Cardiac septum (tissue), 1 donor: ENCODE measurements at regions of chr19 and their contacts with region 1.

Region 1: GRCh38 chr19:34974646-34975045 is 10.6 kb upstream of the ZNF792 start:
- DNase-seq: no peak

Region 2: DNA sequence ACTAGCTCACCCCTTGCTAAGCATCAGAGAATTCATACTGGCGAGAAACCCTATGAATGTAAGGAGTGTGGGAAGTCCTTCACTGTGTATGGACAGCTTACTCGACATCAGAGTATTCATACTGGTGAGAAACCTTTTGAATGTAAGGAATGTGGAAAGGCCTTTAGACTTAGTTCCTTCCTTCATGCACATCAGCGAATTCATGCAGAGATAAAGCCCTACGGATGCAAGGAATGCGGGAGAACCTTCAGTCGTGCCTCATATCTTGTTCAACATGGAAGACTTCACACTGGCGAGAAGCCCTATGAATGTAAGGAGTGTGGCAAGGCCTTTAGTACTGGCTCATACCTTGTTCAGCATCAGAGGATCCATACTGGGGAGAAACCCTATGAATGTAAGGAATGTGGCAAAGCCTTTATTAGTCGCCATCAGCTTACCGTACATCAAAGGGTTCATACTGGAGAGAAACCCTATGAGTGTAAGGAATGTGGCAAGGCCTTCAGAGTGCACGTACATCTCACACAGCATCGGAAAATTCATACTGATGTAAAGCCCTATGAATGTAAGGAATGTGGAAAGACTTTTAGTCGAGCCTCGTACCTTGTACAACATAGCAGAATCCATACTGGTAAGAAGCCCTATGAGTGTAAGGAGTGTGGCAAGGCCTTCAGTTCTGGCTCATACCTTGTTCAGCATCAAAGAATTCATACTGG is 30.6 kb before region 1 on chr19:
- intact Hi-C with region 1: no loop called
- DNase-seq: no peak

Region 3: DNA sequence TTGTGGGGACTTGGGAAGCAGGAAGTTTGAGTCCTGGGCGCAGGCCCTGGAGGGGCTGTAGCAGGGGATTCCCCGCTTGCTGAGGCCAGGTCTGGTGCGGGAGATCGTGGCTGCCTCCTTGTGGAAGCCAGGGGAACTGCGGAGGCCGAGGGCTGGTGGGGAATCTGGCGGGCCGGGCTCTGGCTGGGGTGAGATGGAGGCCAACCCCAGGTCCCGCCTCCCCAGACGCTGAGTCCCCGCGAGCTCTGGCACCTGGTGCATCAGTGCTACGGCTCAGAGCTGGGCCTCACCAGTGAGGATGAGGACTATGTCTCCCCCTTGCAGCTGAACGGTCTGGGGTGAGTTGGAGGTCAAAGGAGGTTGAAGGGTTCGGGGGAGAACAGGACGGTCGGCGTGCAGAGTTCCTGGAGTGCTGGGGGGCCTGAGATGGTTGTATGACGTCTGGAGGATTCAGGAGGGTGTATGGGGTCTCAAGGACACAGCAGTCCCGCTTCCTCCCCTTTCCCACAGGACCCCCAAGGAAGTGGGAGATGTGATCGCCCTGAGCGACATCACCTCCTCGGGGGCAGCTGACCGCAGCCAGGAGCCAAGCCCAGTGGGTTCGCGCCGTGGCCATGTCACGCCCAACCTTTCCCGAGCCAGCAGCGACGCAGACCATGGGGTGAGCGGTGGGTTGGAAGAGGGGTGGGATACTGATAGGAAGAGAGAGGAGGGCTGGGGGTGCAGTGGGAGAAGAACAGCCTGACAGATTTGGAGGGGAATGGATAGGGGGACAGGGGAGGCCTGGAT is 38.6 kb after region 1 on chr19:
- intact Hi-C with region 1: loop called (anchors 1 kb)
- DNase-seq: peak; percentile 90

Region 4: GRCh38 chr19:35088145-35088913 is 113.7 kb after region 1 on chr19:
- intact Hi-C with region 1: loop called (anchors 5 kb)
- DNase-seq: no peak